ENCODE measurements at regions of chr5 and their contacts with region 1.

Region 1: DNA sequence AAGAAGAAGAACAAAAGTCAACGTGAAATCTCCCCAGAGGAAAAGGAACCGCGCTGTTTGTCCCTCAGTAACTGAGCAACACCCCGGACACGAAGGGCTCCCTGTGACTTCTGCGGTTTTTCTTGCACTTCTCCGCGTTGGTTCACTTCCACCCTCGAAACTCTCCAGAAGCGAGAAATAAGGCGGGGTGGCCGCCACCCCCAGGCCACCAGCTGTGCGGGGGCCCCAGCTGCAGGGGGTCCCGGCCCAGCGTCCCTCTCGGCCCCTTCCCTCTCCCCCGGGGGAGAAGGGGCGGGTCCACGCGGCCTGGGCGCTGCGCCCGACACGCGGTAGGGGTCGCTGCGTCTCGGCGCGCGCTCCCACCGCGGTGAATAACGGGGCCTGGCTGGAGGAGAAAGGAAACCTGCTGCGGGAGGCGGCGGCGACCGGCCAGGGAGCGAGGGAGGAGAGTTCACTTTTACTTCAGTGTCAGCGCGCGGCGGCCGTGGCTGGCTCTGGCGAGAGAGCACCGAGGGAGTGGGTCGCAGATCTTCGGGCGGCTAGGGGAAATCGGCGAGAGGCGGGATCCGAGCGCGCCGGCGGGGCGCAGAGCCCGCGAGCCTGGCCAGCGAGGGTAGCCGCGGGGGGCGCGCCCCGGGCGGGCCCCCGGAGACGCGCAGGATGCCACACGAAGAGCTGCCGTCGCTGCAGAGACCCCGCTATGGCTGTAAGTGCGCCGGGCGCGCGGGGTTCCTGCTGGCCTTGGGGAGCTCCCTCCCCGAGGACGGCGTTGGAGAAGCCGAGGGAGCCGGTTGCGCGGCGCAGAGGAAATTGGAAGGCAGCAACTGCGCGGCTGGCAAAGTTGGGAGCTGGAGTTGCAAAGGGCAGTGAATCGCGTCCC is at the start of gene IQGAP2:
- DNase-seq: peak; percentile 88
- CTCF ChIP-seq: peak; percentile 96

Region 2: DNA sequence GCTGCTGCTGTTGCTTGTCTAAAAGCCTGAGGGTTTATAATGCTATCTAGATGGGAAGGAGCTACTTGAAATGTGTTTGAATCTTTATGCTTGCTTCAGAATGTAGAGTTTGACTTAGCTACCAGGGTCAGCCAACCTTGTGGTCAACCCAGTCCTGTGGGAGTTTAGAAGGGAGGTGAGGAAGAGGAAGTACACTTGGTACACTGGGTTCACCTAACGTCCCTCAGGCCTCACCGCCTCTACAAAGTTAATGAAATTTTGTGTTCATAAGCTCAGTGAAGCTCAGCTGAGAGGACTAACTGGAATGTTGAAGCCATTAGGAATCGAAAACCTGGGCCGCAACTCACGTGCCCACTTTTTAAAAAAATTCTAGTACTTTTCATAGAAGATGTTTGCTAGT is 10.6 kb after region 1 on chr5:
- CTCF ChIA-PET with region 1: interaction called, 21 read pairs
- POLR2A ChIA-PET with region 1: no interaction called
- DNase-seq: no peak
- CTCF ChIP-seq: no peak